Activated CD4-positive, alpha-beta memory T cell treated with anti-CD3 and anti-CD28 coated beads for 36 hours (primary cell): ENCODE measurements at regions of chr10 and their contacts with region 1.

Region 1: DNA sequence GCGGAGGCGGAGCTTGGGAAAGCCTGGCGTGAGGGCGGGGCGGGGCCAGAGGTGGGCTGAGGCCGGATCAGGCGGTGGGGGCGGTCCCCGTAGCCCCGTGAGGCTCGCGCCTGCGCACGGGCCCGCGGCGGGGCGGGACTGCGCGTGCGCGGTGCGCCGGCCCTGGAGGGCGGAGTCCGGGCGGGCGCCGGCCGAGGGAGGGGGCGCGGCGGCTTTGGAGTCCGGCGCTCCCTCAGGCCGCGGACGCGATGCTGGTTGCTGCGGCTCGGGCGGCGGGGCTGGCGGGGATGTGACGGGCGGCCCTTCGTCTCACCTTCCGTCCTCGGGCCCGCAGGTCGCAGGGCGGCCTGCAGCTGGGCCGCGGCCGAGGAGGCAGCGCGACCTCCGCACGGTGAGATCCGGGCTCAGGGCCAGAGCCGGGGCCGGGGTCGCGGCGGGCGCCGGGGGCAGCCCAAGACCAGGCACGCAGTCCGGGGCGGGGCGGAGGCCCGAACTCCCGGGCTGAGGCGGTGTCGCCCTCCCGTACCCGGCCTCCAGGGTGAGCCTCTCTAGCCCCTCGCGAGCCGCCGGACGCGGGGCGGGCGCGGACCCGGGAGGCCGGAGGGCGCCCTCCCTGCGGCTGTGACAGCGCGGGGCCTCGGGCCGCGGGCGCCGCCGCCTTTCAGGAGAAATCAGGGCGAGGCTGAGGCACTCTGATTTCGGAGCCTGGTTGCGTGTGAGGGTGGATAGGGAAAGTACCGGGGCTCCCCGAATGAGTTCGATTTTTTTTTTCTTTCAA is at the start of gene CCSER2:
- DNase-seq: peak; percentile 98
- H3K4me3 Mint-ChIP-seq: peak within 1 kb of the TSS; percentile 88
- H3K27ac Mint-ChIP-seq: peak within 1 kb of the TSS; percentile 98
- H3K4me1 Mint-ChIP-seq: peaks cover 30% of the 10 kb centered on the region
- H3K27me3 Mint-ChIP-seq: no peaks in the 10 kb centered on the region
- total RNA-seq, gene CCSER2: 69.8 to 73.5 TPM

Region 2: DNA sequence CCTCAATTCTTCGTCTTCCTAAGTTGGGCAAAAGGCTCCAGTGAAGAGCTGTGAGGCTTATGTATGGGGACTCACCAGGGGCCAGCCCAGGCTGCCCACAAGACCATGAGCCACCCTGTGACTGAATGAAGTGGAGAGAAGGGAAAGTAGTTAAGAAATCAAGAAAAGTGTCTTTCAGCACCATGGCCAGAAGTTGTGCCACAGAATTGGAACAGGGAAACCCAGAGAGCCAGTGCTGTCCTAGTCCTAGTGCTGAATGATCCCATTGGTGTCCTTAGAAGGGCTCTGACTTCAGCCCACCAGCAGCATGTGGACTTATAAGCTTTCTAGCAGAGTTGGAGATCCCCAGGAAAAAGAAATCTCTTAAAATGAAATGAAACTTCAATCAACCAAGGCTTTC is 37.2 kb before region 1 on chr10:
- CTCF ChIA-PET with region 1: no interaction called
- POLR2A ChIA-PET with region 1: interaction called, 4 read pairs
- intact Hi-C with region 1: loop called (anchors 1 kb)
- DNase-seq: no peak
- H3K4me3 Mint-ChIP-seq: no peak overlapping the region
- H3K27ac Mint-ChIP-seq: no peak overlapping the region
- H3K4me1 Mint-ChIP-seq: peaks cover 20% of the 10 kb centered on the region
- H3K27me3 Mint-ChIP-seq: no peaks in the 10 kb centered on the region

Region 3: DNA sequence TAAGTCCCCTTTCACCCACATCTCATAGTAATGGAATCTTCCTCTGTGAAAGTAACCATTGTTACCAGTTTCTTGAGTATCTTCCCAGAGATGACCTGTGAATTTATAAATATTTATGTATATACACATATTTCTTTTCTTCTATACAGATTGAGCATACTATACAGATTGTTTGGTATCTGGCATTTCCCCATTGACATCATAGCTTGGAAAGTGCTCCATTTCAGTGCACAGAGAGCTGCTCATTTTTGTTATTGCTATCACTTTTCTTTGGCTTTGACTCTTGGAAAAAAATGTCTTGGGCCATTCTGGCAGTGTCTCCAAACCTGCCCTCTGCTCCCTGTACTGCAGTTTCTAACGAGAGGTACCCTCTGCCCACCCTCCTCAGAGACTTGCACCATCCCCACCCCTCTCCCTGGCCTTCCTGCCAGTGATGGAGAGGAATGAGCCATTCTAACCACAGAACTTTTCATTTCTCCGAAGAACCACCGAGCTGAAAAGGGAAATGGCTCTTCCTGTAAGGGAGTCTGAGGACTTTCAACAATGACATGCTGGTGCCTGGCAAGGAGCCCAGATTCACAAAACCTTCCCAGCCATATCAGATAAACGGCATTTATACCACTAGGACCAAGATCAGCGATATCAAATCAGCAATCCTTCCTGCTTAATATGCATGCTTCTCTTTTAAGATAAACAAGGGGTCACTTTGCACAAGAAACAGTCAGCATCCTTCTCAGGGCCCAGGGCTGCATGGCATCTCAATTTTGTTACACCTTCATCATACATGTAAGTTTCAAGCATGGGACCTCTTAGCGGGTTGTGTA is 19.9 kb before region 1 on chr10:
- CTCF ChIA-PET with region 1: interaction called, 3 read pairs
- POLR2A ChIA-PET with region 1: interaction called, 10 read pairs
- intact Hi-C with region 1: loop called (anchors 1 kb)
- DNase-seq: peak; percentile 74
- H3K4me3 Mint-ChIP-seq: peak overlapping the region; percentile 45
- H3K27ac Mint-ChIP-seq: peak overlapping the region; percentile 82
- H3K4me1 Mint-ChIP-seq: peaks cover 34% of the 10 kb centered on the region
- H3K27me3 Mint-ChIP-seq: no peaks in the 10 kb centered on the region

Region 4: DNA sequence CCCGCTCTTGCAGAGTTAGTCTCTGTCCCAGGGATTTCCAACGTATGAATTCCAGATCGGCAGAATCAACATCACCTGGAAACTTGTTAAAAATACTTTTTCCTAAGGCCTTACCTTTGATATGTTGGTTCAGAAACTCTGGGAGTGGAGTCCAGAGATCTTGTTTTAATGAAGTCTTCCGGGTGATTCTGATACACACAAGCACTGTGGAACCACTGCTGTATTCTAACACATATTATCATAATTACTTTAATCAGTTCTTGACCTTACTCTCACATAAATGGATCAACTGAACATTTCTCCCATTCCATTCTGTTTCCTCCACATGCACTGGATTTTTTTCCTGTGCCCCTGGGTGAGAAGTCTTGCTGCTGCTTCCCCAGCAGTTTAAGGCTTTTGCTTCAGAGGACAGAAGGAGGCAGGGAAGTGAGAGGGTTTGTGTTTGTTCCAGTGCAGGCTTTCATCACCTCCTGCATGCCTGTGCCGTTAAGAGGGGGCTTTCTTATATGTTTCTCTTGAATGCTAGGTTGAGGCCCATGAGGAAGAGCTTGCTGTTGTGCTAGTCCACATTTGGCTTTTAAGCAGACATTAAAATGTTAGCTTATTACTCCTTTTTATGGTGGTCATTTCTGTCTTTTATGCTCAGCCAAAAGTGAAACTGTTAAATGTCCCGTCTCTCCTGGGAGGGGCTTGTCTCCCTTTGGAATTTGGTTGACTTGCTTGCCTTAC is 32.2 kb after region 1 on chr10:
- CTCF ChIA-PET with region 1: no interaction called
- POLR2A ChIA-PET with region 1: no interaction called
- intact Hi-C with region 1: loop called (anchors 2 kb)
- DNase-seq: no peak
- H3K4me3 Mint-ChIP-seq: no peak overlapping the region
- H3K27ac Mint-ChIP-seq: no peak overlapping the region
- H3K4me1 Mint-ChIP-seq: peaks cover 79% of the 10 kb centered on the region
- H3K27me3 Mint-ChIP-seq: no peaks in the 10 kb centered on the region

Region 5: GRCh38 chr10:84469470-84469869 is 140.9 kb after region 1 on chr10:
- CTCF ChIA-PET with region 1: no interaction called
- POLR2A ChIA-PET with region 1: no interaction called
- intact Hi-C with region 1: no loop called
- DNase-seq: no peak
- H3K4me3 Mint-ChIP-seq: no peak overlapping the region
- H3K27ac Mint-ChIP-seq: no peak overlapping the region
- H3K4me1 Mint-ChIP-seq: peaks cover 3% of the 10 kb centered on the region
- H3K27me3 Mint-ChIP-seq: no peaks in the 10 kb centered on the region